Heart right ventricle (tissue), 16 donors: ENCODE measurements at regions of chrX and their contacts with region 1.

Region 1: DNA sequence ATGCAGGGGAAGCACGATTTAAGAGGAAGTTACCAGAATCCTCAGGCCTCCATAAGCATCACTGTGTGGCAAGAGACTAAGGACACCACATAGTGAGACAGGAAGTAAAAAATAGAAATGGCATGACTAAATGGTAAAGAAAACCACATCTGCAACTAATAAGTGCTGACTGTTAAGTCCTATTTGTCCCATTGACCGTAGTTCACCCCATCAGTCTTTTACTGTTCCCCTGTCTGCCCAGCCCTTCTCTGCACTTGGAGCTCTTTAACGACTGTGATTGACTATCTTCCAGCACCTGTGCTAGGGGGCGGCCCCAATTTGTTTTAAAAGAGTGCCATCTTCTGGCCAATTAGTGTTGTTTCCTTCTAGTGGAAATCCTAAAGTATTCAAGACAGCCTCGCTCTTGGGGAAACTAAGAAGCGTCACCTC is 94.2 kb downstream of the MAOA start:
- DNase-seq: peak in 1 of 2 donors; percentile 44
- ATAC-seq: peak; percentile 61 to 90 (median 85)
- H3K4me3 ChIP-seq: no peak overlapping the region
- H3K27ac ChIP-seq: no peak overlapping the region
- H3K4me1 ChIP-seq: peaks cover 0 to 8% (median 0%) of the 10 kb centered on the region in 9 donors
- H3K27me3 ChIP-seq: peaks cover 0 to 13% (median 0%) of the 10 kb centered on the region in 7 donors
- CTCF ChIP-seq: peak; percentile 23 to 67 (median 56)

Region 2: GRCh38 chrX:41781502-41781901 is 1968.8 kb before region 1 on chrX:
- intact Hi-C with region 1: loop called in 1 of 10 experiments (anchors 10 kb)
- DNase-seq: no peak
- ATAC-seq: peak in 1 of 8 donors; percentile 64
- H3K4me3 ChIP-seq: no peak overlapping the region
- H3K27ac ChIP-seq: no peak overlapping the region
- H3K4me1 ChIP-seq: peaks cover 0 to 8% (median 0%) of the 10 kb centered on the region in 9 donors
- H3K27me3 ChIP-seq: peaks cover 0 to 22% (median 0%) of the 10 kb centered on the region in 7 donors
- CTCF ChIP-seq: peak; percentile 10 to 73 (median 59)

Region 3: DNA sequence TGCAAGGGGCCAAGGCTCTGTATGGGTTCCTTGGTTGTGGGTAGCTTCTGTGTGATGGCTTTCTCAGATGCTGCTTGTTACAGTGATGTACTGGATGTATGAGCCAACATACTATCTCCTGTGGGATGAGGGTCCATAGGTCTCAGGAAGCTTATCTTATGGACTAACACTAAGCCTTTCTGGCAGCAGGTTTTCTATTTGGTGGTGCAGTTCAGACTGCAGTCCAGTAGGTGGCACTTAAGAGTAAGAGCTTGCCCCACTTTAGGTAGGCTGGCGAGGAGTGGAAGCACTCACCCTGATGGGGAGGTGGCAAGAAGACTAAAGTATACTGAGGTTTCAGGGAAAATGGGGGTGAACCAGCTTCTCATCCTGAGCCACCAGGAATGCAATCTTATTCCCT is 400.9 kb before region 1 on chrX:
- intact Hi-C with region 1: loop called in 1 of 10 experiments (anchors 10 kb)
- DNase-seq: no peak
- ATAC-seq: no peak
- H3K4me3 ChIP-seq: no peak overlapping the region
- H3K27ac ChIP-seq: no peak overlapping the region
- H3K4me1 ChIP-seq: no peaks in the 10 kb centered on the region
- H3K27me3 ChIP-seq: peaks cover 0 to 29% (median 0%) of the 10 kb centered on the region in 7 donors
- CTCF ChIP-seq: peak; percentile 8 to 65 (median 37)

Region 4: GRCh38 chrX:43564953-43565352 is 185.3 kb before region 1 on chrX:
- intact Hi-C with region 1: loop called in 5 of 10 experiments (anchors 2 to 5 kb)
- DNase-seq: no peak
- ATAC-seq: no peak
- H3K4me3 ChIP-seq: no peak overlapping the region
- H3K27ac ChIP-seq: no peak overlapping the region
- H3K4me1 ChIP-seq: no peaks in the 10 kb centered on the region
- H3K27me3 ChIP-seq: peaks cover 0 to 20% (median 0%) of the 10 kb centered on the region in 7 donors
- CTCF ChIP-seq: no peak

Region 5: DNA sequence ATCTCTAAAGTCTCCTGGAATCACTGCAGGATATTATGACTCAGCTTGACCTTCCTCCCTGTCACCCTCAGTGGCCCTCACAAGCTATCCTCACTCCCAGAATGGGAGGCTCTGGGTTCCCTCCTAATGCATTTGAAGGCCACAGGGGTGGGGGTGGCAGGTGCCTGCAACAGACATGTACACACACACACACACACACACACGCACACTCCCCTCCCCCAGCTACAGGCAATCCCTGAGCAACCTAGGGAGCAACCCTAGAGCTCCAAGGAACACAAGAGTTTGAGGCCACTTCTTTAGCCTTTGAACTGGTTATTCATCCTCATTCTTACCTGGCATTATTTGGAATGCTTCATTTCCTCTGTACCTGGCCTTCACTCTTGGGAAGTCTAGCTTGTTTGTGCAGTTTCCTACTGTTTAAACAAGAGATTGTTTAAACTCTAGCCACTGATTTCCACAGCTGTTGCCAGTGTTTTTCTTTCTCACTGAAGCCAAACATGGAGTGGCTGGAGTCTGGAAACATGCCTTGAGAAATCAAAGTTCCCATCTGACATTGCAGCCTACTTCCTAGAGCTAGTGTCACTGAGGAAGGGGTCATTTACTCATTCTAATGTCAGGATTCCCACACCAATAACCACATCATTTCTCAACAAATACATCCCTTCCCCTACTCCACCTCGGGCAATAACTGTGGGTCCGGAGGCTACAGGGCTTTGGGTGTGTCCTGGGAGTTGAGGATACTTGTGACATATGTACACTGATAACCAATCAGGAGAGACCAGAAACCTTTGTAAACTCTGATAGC is 56.5 kb before region 1 on chrX:
- intact Hi-C with region 1: no loop called
- DNase-seq: no peak
- ATAC-seq: peak in 6 of 8 donors; percentile 16 to 61 (median 46)
- H3K4me3 ChIP-seq: no peak overlapping the region
- H3K27ac ChIP-seq: peak overlapping the region in 5 of 10 donors; percentile 13 to 48 (median 28)
- H3K4me1 ChIP-seq: peaks cover 0 to 23% (median 0%) of the 10 kb centered on the region in 9 donors
- H3K27me3 ChIP-seq: peaks cover 0 to 17% (median 0%) of the 10 kb centered on the region in 7 donors
- CTCF ChIP-seq: no peak